PC-9 (cell line): ENCODE measurements at regions of chr10 and their contacts with region 1.

Region 1: DNA sequence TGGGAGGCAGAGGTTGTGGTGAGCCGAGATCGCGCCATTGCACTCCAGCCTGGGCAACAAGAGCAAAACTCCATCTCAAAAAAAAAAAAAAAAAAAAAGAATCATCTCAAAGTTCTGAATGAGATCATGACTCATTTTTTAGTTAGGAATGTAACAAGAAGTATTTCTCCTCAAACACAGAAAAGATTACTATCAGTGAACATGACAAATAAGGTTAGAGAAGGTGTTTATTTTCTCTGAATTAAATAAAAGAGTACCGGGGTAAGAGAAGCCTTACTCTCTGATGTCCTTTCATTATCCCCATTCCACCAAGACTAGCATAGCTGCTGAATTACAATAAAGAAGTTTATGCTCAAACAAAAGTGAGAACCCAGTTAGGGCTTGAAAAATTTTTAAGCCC is 50.1 kb downstream of the IPMK start:
- DNase-seq: peak in 1 of 2 experiments; percentile 64
- H3K4me3 ChIP-seq: no peak overlapping the region
- H3K27ac ChIP-seq: peak overlapping the region; percentile 6; the same call in 1 of the 2 replicates
- H3K4me1 ChIP-seq: peaks cover 6% of the 10 kb centered on the region
- H3K27me3 ChIP-seq: no peaks in the 10 kb centered on the region
- CTCF ChIP-seq: no peak

Region 2: DNA sequence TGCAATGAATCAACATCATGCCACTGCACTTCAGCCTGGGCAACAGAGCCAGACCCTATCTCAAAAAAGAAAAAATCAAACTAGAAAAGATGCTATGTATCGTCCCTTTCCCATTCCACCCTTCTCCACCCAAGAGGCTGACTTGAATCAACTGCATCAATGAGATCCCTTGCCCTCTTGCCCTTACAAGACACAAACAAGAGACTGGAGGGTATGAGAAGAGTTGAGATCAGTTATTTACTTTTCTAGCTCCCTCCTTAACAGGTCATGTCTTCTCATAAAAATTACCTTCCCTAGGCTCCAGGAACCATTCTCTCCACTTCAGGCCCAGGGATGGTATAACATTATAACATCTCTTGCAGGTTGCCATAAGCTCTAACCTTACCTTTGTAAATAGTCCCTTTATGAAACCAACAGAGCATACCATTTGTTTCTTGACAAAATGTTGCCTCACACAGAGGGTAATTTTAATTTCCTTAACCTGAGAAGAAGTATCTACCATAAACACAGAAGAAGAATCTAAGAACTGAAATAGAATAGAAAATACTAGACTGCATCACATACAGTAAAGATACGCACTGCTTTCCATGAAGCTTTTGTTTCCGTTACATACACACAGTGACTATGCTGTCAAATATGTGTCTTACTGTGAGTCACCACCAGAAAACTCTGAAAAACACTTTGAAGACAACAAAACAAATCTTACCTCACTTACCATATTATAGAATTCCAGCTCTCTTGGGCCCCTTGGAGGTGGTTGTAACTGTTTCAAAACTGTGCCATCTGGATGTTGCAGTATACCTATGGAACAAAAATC is 19.6 kb after region 1 on chr10:
- CTCF ChIA-PET with region 1: interaction called, 3 read pairs
- POLR2A ChIA-PET with region 1: no interaction called
- intact Hi-C with region 1: loop called (anchors 1 kb)
- DNase-seq: peak in 1 of 2 experiments; percentile 56
- H3K4me3 ChIP-seq: no peak overlapping the region
- H3K27ac ChIP-seq: no peak overlapping the region
- H3K4me1 ChIP-seq: peaks cover 11% of the 10 kb centered on the region
- H3K27me3 ChIP-seq: no peaks in the 10 kb centered on the region
- CTCF ChIP-seq: no peak

Region 3: GRCh38 chr10:58280982-58281752 is 63.6 kb after region 1 on chr10:
- CTCF ChIA-PET with region 1: no interaction called
- POLR2A ChIA-PET with region 1: interaction called, 7 read pairs
- intact Hi-C with region 1: loop called (anchors 2 kb)
- DNase-seq: peak in 1 of 2 experiments; percentile 49
- H3K4me3 ChIP-seq: no peak overlapping the region
- H3K27ac ChIP-seq: peak overlapping the region; percentile 53
- H3K4me1 ChIP-seq: peaks cover 27% of the 10 kb centered on the region
- H3K27me3 ChIP-seq: no peaks in the 10 kb centered on the region
- CTCF ChIP-seq: no peak

Region 4: DNA sequence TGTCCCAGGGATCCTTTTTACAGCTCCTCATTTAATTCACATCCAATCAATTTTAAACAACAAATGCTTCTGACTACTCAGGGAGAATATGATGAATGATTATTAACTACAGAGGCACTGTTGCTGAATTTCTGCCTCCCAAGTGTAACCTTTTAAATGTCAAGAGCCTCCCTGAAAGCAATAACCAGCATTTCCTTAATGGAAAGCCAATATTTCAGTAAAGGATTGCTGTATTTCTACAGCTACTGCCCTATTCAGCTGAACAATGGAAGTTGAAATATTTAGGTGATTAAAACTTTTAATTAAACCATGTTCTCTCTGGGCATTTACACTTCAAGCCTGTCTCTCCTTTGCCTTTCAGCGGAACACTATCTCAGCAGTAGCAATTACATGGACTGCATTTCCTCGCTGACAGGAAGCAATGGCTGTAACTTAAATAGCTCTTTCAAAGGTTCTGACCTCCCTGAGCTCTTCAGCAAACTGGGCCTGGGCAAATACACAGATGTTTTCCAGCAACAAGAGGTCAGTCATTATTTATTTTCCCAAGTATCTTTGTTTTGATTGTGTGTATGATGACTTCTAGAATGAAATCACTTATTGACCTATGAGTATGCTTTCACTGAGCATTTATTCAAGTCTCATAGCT is 599.7 kb after region 1 on chr10:
- CTCF ChIA-PET with region 1: no interaction called
- POLR2A ChIA-PET with region 1: no interaction called
- intact Hi-C with region 1: no loop called
- DNase-seq: no peak
- H3K4me3 ChIP-seq: no peak overlapping the region
- H3K27ac ChIP-seq: no peak overlapping the region
- H3K4me1 ChIP-seq: peaks cover 22% of the 10 kb centered on the region
- H3K27me3 ChIP-seq: no peaks in the 10 kb centered on the region
- CTCF ChIP-seq: no peak